Adrenal gland (tissue), 19 donors: ENCODE measurements at regions of chr11 and their contacts with region 1.

Region 1: GRCh38 chr11:95150946-95151684 is 61.5 kb downstream of the ENDOD1 start:
- DNase-seq: peak; percentile 91 to 96 (median 94)
- H3K4me3 ChIP-seq: peak overlapping the region; percentile 32 to 68 (median 57)
- H3K27ac ChIP-seq: peak overlapping the region in 4 of 5 donors; percentile 89 to 94 (median 92)
- H3K4me1 ChIP-seq: peaks cover 4 to 38% of the 10 kb centered on the region in 2 donors
- H3K27me3 ChIP-seq: no peaks in the 10 kb centered on the region
- CTCF ChIP-seq: peak; percentile 74 to 98 (median 93)
- POLR2A ChIP-seq: peak; percentile 54 to 66

Region 2: DNA sequence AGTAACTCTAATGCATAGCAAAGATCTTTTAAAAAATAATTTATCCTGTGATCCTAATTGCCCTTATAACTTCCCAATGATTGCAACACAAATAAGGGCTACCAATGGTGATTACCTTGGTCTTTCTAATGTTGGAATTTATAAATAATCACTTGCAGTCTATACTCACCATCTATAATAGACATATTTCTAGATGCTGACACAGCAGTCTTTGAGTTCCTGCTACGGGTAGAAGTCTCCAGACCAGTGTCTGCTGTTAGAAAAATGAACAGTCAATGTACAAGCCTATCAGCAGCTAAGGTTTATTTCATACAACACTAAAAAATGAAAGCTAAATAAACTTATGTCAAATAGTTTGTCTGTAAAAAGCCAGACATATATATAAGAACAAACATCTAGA is 705.5 kb before region 1 on chr11:
- intact Hi-C with region 1: no loop called
- DNase-seq: no peak
- H3K4me3 ChIP-seq: no peak overlapping the region
- H3K27ac ChIP-seq: no peak overlapping the region
- H3K4me1 ChIP-seq: no peaks in the 10 kb centered on the region
- H3K27me3 ChIP-seq: no peaks in the 10 kb centered on the region
- CTCF ChIP-seq: no peak
- POLR2A ChIP-seq: no peak

Region 3: GRCh38 chr11:95074806-95075563 is 76.1 kb before region 1 on chr11:
- intact Hi-C with region 1: loop called in 1 of 2 experiments (anchors 5 kb)
- DNase-seq: peak; percentile 59 to 93 (median 90)
- H3K4me3 ChIP-seq: no peak overlapping the region
- H3K27ac ChIP-seq: peak overlapping the region in 3 of 5 donors; percentile 13 to 64 (median 52)
- H3K4me1 ChIP-seq: peaks cover 12 to 28% of the 10 kb centered on the region in 2 donors
- H3K27me3 ChIP-seq: no peaks in the 10 kb centered on the region
- CTCF ChIP-seq: no peak
- POLR2A ChIP-seq: no peak

Region 4: DNA sequence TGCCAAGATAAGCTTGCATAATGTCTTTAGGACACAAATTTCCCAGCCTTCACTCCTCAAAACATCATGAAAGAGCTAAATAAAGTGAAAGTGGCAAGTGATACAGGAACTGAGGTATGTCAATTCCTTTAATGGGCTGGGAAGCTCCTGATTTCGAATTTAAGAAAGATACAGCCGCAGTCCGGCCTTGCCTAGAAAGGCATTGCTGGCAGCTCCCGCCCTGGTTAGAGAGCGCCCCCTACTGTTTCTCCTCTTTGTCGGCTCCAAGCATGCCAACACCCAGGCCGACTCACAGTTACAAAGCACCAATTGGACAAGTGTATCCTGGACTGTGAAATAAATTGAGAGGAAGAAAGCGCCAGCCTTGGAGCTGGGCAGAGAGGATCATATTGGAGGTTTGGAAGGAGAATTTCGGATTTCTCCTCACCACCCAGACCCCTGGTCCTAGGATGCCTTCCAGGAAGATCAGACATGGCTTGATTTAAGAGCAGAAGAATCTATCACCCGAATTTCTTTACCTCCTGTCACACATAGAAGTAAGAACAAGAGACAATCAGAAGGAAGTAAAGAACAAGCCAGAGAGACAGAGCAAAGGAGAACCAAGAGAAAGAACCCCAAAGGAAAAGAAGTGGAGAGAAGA is 554.5 kb after region 1 on chr11:
- intact Hi-C with region 1: loop called (anchors 2 to 5 kb)
- DNase-seq: peak; percentile 88 to 95 (median 90)
- H3K4me3 ChIP-seq: no peak overlapping the region
- H3K27ac ChIP-seq: peak overlapping the region in 2 of 5 donors; percentile 9 to 58
- H3K4me1 ChIP-seq: peaks cover 0 to 21% of the 10 kb centered on the region in 2 donors
- H3K27me3 ChIP-seq: no peaks in the 10 kb centered on the region
- CTCF ChIP-seq: peak; percentile 92 to 97 (median 94)
- POLR2A ChIP-seq: no peak

Region 5: DNA sequence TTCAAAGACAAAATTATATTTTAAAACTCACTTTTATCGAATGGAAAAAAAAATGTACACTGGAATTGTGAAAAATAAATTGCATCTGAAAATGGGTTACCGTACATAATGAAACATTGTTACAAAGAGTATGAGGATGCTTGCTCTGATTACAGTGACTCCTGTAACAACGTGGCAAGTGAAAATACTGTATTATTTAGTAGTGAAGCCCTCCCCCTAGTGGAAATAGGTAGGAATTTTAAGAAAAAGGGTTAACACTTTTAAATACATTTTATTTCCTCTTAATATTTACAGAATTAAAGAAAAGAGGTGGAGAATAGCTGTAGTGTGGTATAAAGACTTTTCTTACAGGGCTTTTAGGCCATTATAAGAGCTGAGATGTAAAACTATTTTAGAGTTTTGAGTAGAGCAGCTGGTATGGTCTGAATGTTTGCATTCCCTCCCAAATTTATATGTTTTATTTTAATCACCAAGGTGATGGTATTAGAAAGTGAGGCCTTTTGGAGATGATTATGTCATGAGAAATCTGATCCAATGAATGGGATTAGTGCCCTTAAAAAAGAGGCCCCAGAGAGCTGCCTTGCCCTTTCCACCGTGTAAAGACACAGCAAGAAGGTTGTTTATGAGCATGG is 613.3 kb after region 1 on chr11:
- intact Hi-C with region 1: loop called (anchors 2 kb)
- DNase-seq: no peak
- H3K4me3 ChIP-seq: no peak overlapping the region
- H3K27ac ChIP-seq: no peak overlapping the region
- H3K4me1 ChIP-seq: no peaks in the 10 kb centered on the region
- H3K27me3 ChIP-seq: no peaks in the 10 kb centered on the region
- CTCF ChIP-seq: peak; percentile 70 to 85 (median 76)
- POLR2A ChIP-seq: no peak